GM12878 (cell line): ENCODE measurements at regions of chr2 and their contacts with region 1.

Region 1: DNA sequence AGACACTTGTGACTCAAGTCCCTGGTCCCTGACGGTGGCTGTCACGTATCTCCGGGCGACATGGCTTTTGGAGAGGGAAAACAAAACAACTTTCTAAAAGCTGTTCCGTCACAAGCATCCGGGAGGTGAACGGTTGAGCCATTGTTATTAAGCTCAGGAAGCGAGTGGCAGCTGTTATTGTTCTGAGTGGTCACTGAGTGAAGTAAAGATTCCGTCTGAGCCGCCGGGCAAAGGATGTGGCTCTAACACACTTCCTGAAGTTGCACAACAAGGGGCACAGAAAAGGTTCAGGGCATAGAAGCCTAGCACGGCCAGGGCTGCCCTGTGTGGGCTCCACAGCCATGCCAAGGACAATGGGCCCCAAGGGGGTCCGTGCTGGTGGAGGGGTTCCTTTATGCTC is 24.3 kb downstream of the INPP5D start:
- DNase-seq: peak; percentile 78
- ATAC-seq: peak; percentile 28
- H3K4me3 ChIP-seq: peak overlapping the region; percentile 47
- H3K27ac ChIP-seq: peak overlapping the region; percentile 100
- H3K4me1 ChIP-seq: peaks cover 91% of the 10 kb centered on the region
- H3K27me3 ChIP-seq: no peaks in the 10 kb centered on the region
- CTCF ChIP-seq: no peak
- EP300 ChIP-seq: peak; percentile 57 to 62; a peak in 2 of 4 replicates
- POLR2A ChIP-seq: peak; percentile 51; the same call in 1 of the 2 replicates
- RAD21 ChIP-seq: no peak

Region 2: GRCh38 chr2:233068762-233069418 is 15.6 kb before region 1 on chr2:
- CTCF ChIA-PET with region 1: interaction called, 68 read pairs
- POLR2A ChIA-PET with region 1: interaction called, 271 read pairs
- RAD21 ChIA-PET with region 1: interaction called, 361 read pairs
- SMC1A ChIA-PET with region 1: interaction called, 351 read pairs
- in situ Hi-C with region 1: no loop called
- intact Hi-C with region 1: no loop called
- DNase-seq: no peak
- ATAC-seq: peak; percentile 57
- H3K4me3 ChIP-seq: peak overlapping the region; percentile 58
- H3K27ac ChIP-seq: peak overlapping the region; percentile 14
- H3K4me1 ChIP-seq: peaks cover 62% of the 10 kb centered on the region
- H3K27me3 ChIP-seq: no peaks in the 10 kb centered on the region
- CTCF ChIP-seq: no peak
- EP300 ChIP-seq: no peak
- POLR2A ChIP-seq: no peak; the same call in none of the 2 replicates
- RAD21 ChIP-seq: no peak

Region 3: GRCh38 chr2:233108611-233109490 is 24.4 kb after region 1 on chr2:
- CTCF ChIA-PET with region 1: interaction called, 3 read pairs
- POLR2A ChIA-PET with region 1: interaction called, 27 read pairs
- RAD21 ChIA-PET with region 1: interaction called, 27 read pairs
- SMC1A ChIA-PET with region 1: interaction called, 328 read pairs
- in situ Hi-C with region 1: no loop called
- intact Hi-C with region 1: no loop called
- DNase-seq: no peak
- ATAC-seq: peak; percentile 81
- H3K4me3 ChIP-seq: 0 out of 2 replicates have a peak overlapping the region, but pooled peaks have one; percentile 30
- H3K27ac ChIP-seq: peak overlapping the region; percentile 43
- H3K4me1 ChIP-seq: peaks cover 34% of the 10 kb centered on the region
- H3K27me3 ChIP-seq: no peaks in the 10 kb centered on the region
- CTCF ChIP-seq: no peak; a peak in 1 of 6 replicates
- EP300 ChIP-seq: no peak
- POLR2A ChIP-seq: peak; percentile 26; the same call in 1 of the 2 replicates
- RAD21 ChIP-seq: no peak

Region 4: GRCh38 chr2:233142355-233142897 is 57.9 kb after region 1 on chr2:
- CTCF ChIA-PET with region 1: interaction called, 3 read pairs
- POLR2A ChIA-PET with region 1: interaction called, 10 read pairs
- RAD21 ChIA-PET with region 1: interaction called, 10 read pairs
- SMC1A ChIA-PET with region 1: interaction called, 6 read pairs
- in situ Hi-C with region 1: no loop called
- intact Hi-C with region 1: loop called (anchors 1 kb)
- DNase-seq: peak; percentile 74
- ATAC-seq: peak; percentile 93
- H3K4me3 ChIP-seq: no peak overlapping the region; the same call in 1 of the 2 replicates
- H3K27ac ChIP-seq: peak overlapping the region; percentile 74
- H3K4me1 ChIP-seq: peaks cover 19% of the 10 kb centered on the region
- H3K27me3 ChIP-seq: no peaks in the 10 kb centered on the region
- CTCF ChIP-seq: no peak
- EP300 ChIP-seq: peak; percentile 34 to 55; a peak in 2 of 4 replicates
- POLR2A ChIP-seq: peak; percentile 60; the same call in 1 of the 2 replicates
- RAD21 ChIP-seq: 0 out of 2 replicates have a peak, but pooled peaks have one; percentile 24

Region 5: DNA sequence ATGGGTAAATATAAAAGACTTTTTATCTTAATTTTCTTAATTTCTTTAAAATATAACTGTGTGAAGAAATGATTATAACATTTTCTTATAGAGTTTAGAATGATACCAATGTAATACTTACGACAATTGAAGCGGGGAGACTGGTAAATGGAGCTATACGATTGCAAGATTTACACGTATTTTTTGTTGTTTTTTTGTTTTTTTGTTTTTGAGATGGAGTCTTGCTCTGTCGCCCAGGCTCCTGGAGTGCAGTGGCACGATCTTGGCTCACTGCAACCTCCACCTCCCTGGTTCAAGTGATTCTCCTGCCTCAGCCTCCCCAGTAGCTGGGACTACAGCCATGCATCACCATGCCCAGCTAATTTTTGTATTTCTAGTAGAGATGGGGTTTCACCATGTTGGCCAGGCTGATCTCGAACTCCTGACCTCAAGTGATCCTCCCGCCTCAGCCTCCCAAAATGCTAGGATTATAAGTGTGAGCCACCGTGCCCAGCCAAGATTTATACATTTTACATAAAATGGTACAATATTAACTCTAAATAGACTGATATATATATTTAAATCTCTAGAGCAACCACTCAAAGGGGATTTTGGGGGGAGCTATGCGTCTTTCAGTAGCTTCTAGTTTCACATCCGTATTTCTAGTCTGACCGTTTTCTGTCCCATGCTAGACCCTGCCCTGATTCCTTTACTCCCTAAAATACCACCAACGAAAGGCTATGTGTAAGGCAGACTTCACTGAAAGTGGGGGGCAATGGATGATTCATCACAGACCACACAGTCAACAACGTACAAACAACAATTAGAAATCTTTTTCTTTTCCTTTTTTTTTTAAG is 138.8 kb after region 1 on chr2:
- CTCF ChIA-PET with region 1: no interaction called
- POLR2A ChIA-PET with region 1: interaction called, 5 read pairs
- RAD21 ChIA-PET with region 1: interaction called, 8 read pairs
- SMC1A ChIA-PET with region 1: interaction called, 13 read pairs
- in situ Hi-C with region 1: no loop called
- intact Hi-C with region 1: no loop called
- DNase-seq: peak; percentile 75
- ATAC-seq: peak; percentile 95
- H3K4me3 ChIP-seq: no peak overlapping the region
- H3K27ac ChIP-seq: peak overlapping the region; percentile 66
- H3K4me1 ChIP-seq: peaks cover 28% of the 10 kb centered on the region
- H3K27me3 ChIP-seq: no peaks in the 10 kb centered on the region
- CTCF ChIP-seq: no peak
- EP300 ChIP-seq: peak; percentile 62 to 87; a peak in 3 of 4 replicates
- POLR2A ChIP-seq: no peak
- RAD21 ChIP-seq: no peak